ENCODE measurements at regions of chr10 and their contacts with region 1.

Region 1: GRCh38 chr10:72997099-72997498 is 42.5 kb upstream of the PLA2G12B start:
- DNase-seq: no peak
- H3K27ac ChIP-seq: no peak overlapping the region
- CTCF ChIP-seq: no peak

Region 2: GRCh38 chr10:72821606-72822005 is 175.5 kb before region 1 on chr10:
- CTCF ChIA-PET with region 1: no interaction called
- POLR2A ChIA-PET with region 1: no interaction called
- DNase-seq: no peak
- H3K27ac ChIP-seq: no peak overlapping the region
- CTCF ChIP-seq: no peak

Region 3: DNA sequence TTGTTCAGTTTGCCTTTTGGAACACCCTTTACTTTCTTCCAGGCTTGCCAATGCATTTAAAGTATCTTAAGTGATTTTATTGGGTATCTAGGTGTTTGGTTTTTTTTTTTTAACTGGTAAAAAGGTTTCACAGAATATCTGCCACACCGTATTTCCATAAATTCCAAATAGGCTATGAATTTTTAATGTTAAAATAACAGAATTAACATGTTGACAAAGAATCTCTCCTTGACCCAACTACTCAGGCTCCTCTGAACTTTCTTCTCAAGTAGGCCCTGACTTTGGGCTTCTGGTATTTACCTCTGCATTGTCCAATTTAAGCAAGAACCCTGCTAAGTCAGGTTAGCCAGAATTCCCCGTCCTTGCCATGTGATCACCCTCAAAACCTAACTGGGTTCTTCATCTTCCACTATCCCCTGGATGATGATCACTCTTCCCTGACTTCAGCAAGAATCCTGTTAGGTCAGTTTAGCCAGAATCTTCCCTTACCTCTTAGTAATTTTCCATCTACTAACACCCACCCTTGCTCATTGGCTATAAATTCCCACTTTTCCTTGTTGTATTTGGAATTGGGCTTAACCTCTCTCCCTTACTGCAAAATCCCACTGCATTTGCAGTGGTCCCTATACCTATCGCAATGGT is 18.8 kb after region 1 on chr10:
- CTCF ChIA-PET with region 1: no interaction called
- POLR2A ChIA-PET with region 1: interaction called, 10 read pairs
- DNase-seq: no peak
- H3K27ac ChIP-seq: no peak overlapping the region
- CTCF ChIP-seq: no peak

Measured in RWPE1 (cell line).